ENCODE measurements at regions of chr17 and their contacts with region 1.

Region 1: DNA sequence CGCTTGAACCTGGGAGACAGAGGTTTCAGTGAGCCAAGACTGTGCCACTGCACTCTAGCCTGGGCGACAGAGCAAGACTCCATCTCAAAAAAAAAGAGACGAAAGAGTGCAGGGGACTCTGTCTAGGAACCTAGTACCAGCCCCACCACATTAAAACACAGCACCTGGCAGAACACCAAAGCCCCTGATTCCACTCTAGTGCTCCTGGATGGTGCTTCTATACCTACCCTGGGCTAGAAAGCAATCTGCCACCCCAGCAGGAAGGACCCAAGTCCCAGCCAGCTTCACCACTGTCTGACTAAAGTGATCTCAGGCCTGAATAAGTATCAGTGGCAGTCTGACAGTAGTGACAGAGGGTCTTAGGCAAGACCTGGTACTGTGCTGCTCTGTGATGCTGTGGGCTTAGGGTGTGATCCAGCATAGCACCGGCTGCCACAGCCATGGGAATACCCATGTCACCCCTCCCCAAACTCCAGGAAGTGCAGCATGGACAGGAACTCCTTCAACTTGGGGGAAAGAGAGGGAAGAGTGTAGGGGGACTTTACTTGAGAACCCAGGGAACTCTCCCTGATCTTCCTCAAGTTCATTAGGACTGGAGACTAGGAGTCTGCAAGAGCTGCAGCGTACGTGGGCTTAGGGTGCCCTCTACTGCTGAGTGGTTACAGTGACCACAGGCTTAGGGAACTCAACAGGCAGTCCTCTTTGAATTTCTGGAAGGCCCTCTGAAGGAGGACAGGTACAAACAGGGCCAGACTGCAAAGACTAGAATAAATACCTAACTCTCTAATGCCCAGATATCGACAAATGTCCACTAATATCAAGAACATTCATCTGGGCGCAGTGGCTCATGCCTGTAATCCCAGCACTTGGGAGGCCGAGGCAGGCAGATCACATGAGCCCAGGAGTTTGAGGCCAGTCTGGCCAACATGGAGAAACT is 30.0 kb upstream of the RNF43 start:
- DNase-seq: peak; percentile 56 to 82 (median 65)
- ATAC-seq: peak; percentile 77 to 100 (median 98)
- H3K4me3 ChIP-seq: no peak overlapping the region
- H3K27ac ChIP-seq: no peak overlapping the region
- H3K4me1 ChIP-seq: no peaks in the 10 kb centered on the region
- H3K27me3 ChIP-seq: no peaks in the 10 kb centered on the region
- CTCF ChIP-seq: peak; percentile 20 to 67 (median 56)

Region 2: GRCh38 chr17:58303971-58304725 is 143.2 kb before region 1 on chr17:
- intact Hi-C with region 1: loop called in 2 of 3 experiments (anchors 5 to 10 kb)
- DNase-seq: peak in 4 of 6 donors; percentile 30 to 83 (median 68)
- ATAC-seq: peak; percentile 83 to 94 (median 88)
- H3K4me3 ChIP-seq: no peak overlapping the region
- H3K27ac ChIP-seq: no peak overlapping the region
- H3K4me1 ChIP-seq: no peaks in the 10 kb centered on the region
- H3K27me3 ChIP-seq: no peaks in the 10 kb centered on the region
- CTCF ChIP-seq: peak; percentile 55 to 71 (median 63)

Region 3: GRCh38 chr17:58324409-58325288 is 122.7 kb before region 1 on chr17:
- intact Hi-C with region 1: loop called in 1 of 3 experiments (anchors 5 kb)
- DNase-seq: peak; percentile 58 to 90 (median 74)
- ATAC-seq: peak; percentile 91 to 96 (median 94)
- H3K4me3 ChIP-seq: peak overlapping the region; percentile 62 to 83 (median 74)
- H3K27ac ChIP-seq: no peak overlapping the region
- H3K4me1 ChIP-seq: no peaks in the 10 kb centered on the region
- H3K27me3 ChIP-seq: no peaks in the 10 kb centered on the region
- CTCF ChIP-seq: no peak

Region 4: DNA sequence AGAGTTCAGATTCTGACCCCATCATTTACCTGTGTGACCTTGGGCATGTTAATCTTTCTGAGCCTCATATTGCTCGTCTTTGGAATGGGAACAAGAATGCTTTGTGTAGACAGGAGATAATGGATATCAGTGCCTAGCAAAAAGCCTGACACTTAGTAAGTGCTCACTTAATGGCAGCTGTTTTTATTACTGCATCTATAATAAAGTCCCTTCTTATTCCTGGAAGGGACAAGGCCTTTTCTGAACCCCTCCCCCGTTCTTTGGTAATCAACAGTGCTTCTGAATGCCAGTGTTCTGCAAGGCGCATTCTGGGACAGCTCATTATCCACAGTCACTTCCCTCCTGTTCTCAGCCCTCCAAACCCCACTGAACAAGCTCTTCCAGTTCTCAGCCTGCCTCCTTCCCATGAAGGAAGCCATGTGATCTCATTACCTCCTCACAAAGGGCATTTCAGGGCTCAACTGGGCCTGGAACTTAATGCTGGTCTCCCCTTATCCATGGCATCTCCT is 70.2 kb before region 1 on chr17:
- intact Hi-C with region 1: no loop called
- DNase-seq: peak in 2 of 6 donors; percentile 25 to 42
- ATAC-seq: peak in 3 of 4 donors; percentile 53 to 55 (median 53)
- H3K4me3 ChIP-seq: no peak overlapping the region
- H3K27ac ChIP-seq: no peak overlapping the region
- H3K4me1 ChIP-seq: peaks cover 19 to 44% (median 41%) of the 10 kb centered on the region in 3 donors
- H3K27me3 ChIP-seq: no peaks in the 10 kb centered on the region
- CTCF ChIP-seq: no peak